ENCODE measurements at regions of chr1 and their contacts with region 1.

Region 1: GRCh38 chr1:111222308-111223125 is 5.0 kb upstream of the CHI3L2 start:
- DNase-seq: peak; percentile 83
- ATAC-seq: peak; percentile 48
- H3K4me3 ChIP-seq: peak overlapping the region in 3 of 5 experiments; percentile 3 to 26 (median 5)
- H3K4me3 Mint-ChIP-seq: peak overlapping the region; percentile 72
- H3K27ac ChIP-seq: peak overlapping the region; percentile 46 to 92
- H3K27ac Mint-ChIP-seq: peak overlapping the region; percentile 91
- H3K4me1 ChIP-seq: peaks cover 85 to 87% of the 10 kb centered on the region in 2 donors
- H3K4me1 Mint-ChIP-seq: peaks cover 82% of the 10 kb centered on the region
- H3K27me3 ChIP-seq: no peaks in the 10 kb centered on the region
- H3K27me3 Mint-ChIP-seq: no peaks in the 10 kb centered on the region
- CTCF ChIP-seq: peak; percentile 89

Region 2: GRCh38 chr1:110787328-110788071 is 435.0 kb before region 1 on chr1:
- CTCF ChIA-PET with region 1: no interaction called
- POLR2A ChIA-PET with region 1: no interaction called
- intact Hi-C with region 1: loop called (anchors 2 kb)
- DNase-seq: peak; percentile 88
- ATAC-seq: peak; percentile 78
- H3K4me3 ChIP-seq: peak overlapping the region; percentile 9 to 57 (median 40)
- H3K4me3 Mint-ChIP-seq: peak overlapping the region; percentile 75
- H3K27ac ChIP-seq: peak overlapping the region; percentile 63 to 90
- H3K27ac Mint-ChIP-seq: peak overlapping the region; percentile 99
- H3K4me1 ChIP-seq: peaks cover 56% of the 10 kb centered on the region in 2 donors
- H3K4me1 Mint-ChIP-seq: peaks cover 65% of the 10 kb centered on the region
- H3K27me3 ChIP-seq: no peaks in the 10 kb centered on the region
- H3K27me3 Mint-ChIP-seq: no peaks in the 10 kb centered on the region
- CTCF ChIP-seq: no peak

Region 3: GRCh38 chr1:111127923-111128643 is 94.4 kb before region 1 on chr1:
- CTCF ChIA-PET with region 1: interaction called, 6 read pairs
- POLR2A ChIA-PET with region 1: interaction called, 9 read pairs
- intact Hi-C with region 1: loop called (anchors 2 kb)
- DNase-seq: peak; percentile 88
- ATAC-seq: peak; percentile 88
- H3K4me3 ChIP-seq: peak overlapping the region in 3 of 5 experiments; percentile 26 to 58 (median 31)
- H3K4me3 Mint-ChIP-seq: peak overlapping the region; percentile 36
- H3K27ac ChIP-seq: peak overlapping the region; percentile 95 to 98
- H3K27ac Mint-ChIP-seq: peak overlapping the region; percentile 72
- H3K4me1 ChIP-seq: peaks cover 79 to 93% of the 10 kb centered on the region in 2 donors
- H3K4me1 Mint-ChIP-seq: peaks cover 83% of the 10 kb centered on the region
- H3K27me3 ChIP-seq: no peaks in the 10 kb centered on the region
- H3K27me3 Mint-ChIP-seq: no peaks in the 10 kb centered on the region
- CTCF ChIP-seq: no peak

Region 4: DNA sequence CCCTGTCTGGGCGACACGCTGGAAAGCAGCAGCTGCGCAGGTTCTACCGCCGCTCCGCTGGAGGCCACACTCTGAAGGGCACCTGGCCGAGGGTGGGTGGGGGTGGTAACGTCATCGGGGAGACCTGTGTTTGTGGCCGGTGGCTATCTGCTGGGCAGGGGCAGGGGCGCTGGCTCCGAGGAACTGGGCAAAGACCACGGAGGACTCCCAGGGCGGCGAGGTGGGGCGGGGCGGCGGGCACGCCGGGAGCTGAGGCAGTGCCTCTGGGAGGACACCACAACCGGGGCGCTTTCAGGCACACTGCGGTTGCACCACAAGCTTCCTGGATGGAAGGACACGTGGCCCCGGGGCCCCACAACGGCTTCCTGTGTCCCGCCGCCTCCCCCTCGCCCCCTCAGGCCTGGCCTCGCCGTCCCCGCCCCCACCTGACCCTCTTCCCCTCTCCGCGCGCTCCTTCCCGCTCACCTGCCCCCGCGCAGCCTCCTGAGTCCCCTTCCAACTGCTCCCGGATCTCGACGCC is 18.8 kb before region 1 on chr1:
- CTCF ChIA-PET with region 1: interaction called, 205 read pairs
- POLR2A ChIA-PET with region 1: interaction called, 138 read pairs
- intact Hi-C with region 1: no loop called
- DNase-seq: peak; percentile 90
- ATAC-seq: peak; percentile 56
- H3K4me3 ChIP-seq: peak overlapping the region; percentile 60 to 87 (median 83)
- H3K4me3 Mint-ChIP-seq: peak overlapping the region; percentile 91
- H3K27ac ChIP-seq: peak overlapping the region; percentile 88 to 96
- H3K27ac Mint-ChIP-seq: peak overlapping the region; percentile 96
- H3K4me1 ChIP-seq: peaks cover 58 to 75% of the 10 kb centered on the region in 2 donors
- H3K4me1 Mint-ChIP-seq: peaks cover 81% of the 10 kb centered on the region
- H3K27me3 ChIP-seq: no peaks in the 10 kb centered on the region
- H3K27me3 Mint-ChIP-seq: no peaks in the 10 kb centered on the region
- CTCF ChIP-seq: no peak

Region 5: GRCh38 chr1:111334169-111334568 is 111.7 kb after region 1 on chr1:
- CTCF ChIA-PET with region 1: interaction called, 31 read pairs
- POLR2A ChIA-PET with region 1: no interaction called
- intact Hi-C with region 1: loop called (anchors 1 kb)
- DNase-seq: peak; percentile 72
- ATAC-seq: peak; percentile 62
- H3K4me3 ChIP-seq: no peak overlapping the region
- H3K4me3 Mint-ChIP-seq: no peak overlapping the region
- H3K27ac ChIP-seq: no peak overlapping the region
- H3K27ac Mint-ChIP-seq: no peak overlapping the region
- H3K4me1 ChIP-seq: peaks cover 0 to 6% of the 10 kb centered on the region in 2 donors
- H3K4me1 Mint-ChIP-seq: no peaks in the 10 kb centered on the region
- H3K27me3 ChIP-seq: no peaks in the 10 kb centered on the region
- H3K27me3 Mint-ChIP-seq: no peaks in the 10 kb centered on the region
- CTCF ChIP-seq: peak; percentile 74

Region 6: DNA sequence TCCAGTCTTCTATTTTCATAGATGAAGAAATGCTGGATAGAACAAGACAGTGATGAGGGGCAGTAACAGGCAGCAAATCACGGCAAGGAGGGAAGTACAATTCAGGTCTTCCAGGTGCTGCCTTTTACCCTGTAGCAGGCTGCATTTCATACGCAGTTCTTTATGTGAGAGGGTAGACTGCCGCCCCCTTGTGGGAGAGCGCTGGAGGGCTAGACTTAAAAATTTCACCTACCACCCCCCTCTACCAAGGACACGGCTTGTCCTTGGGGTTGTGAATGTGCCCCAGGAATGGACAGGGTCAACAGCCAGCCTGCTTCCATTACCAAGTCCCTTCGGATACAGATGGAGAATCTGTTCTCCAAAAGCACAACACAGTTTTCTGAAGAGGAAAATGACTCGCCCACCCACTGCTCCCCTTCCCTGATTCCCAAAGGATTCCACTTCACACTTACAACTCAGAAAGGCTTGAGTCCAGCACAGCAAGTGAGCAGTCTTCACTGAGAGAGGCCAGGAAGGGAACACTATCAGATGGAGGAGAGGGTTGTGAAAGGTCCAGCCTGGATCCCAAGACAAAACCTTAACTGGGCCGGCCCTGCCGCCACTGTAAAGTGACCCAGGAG is 219.2 kb after region 1 on chr1:
- CTCF ChIA-PET with region 1: interaction called, 31 read pairs
- POLR2A ChIA-PET with region 1: no interaction called
- intact Hi-C with region 1: loop called (anchors 1 kb)
- DNase-seq: peak; percentile 79
- ATAC-seq: peak; percentile 92
- H3K4me3 ChIP-seq: no peak overlapping the region
- H3K4me3 Mint-ChIP-seq: no peak overlapping the region
- H3K27ac ChIP-seq: peak overlapping the region in 1 of 2 donors; percentile 39
- H3K27ac Mint-ChIP-seq: peak overlapping the region; percentile 27
- H3K4me1 ChIP-seq: peaks cover 0 to 4% of the 10 kb centered on the region in 2 donors
- H3K4me1 Mint-ChIP-seq: peaks cover 16% of the 10 kb centered on the region
- H3K27me3 ChIP-seq: no peaks in the 10 kb centered on the region
- H3K27me3 Mint-ChIP-seq: no peaks in the 10 kb centered on the region
- CTCF ChIP-seq: peak; percentile 84

Measured in B cell (primary cell).